MCF 10A (cell line): ENCODE measurements at regions of chr9 and their contacts with region 1.

Region 1: GRCh38 chr9:128688512-128689292 is at the start of gene SET:
- DNase-seq: peak; percentile 92
- H3K4me3 Mint-ChIP-seq: peak within 1 kb of the TSS; percentile 90
- H3K27ac Mint-ChIP-seq: peak within 1 kb of the TSS; percentile 67
- H3K4me1 Mint-ChIP-seq: peaks cover 40% of the 10 kb centered on the region
- H3K27me3 Mint-ChIP-seq: no peaks in the 10 kb centered on the region
- CTCF ChIP-seq: no peak
- total RNA-seq, gene SET: 512 and 563 TPM in 2 replicates

Region 2: GRCh38 chr9:128405077-128405779 is 283.5 kb before region 1 on chr9:
- CTCF ChIA-PET with region 1: no interaction called
- POLR2A ChIA-PET with region 1: no interaction called
- intact Hi-C with region 1: no loop called
- DNase-seq: no peak
- H3K4me3 Mint-ChIP-seq: no peak overlapping the region
- H3K27ac Mint-ChIP-seq: no peak overlapping the region
- H3K4me1 Mint-ChIP-seq: no peaks in the 10 kb centered on the region
- H3K27me3 Mint-ChIP-seq: no peaks in the 10 kb centered on the region
- CTCF ChIP-seq: no peak

Region 3: DNA sequence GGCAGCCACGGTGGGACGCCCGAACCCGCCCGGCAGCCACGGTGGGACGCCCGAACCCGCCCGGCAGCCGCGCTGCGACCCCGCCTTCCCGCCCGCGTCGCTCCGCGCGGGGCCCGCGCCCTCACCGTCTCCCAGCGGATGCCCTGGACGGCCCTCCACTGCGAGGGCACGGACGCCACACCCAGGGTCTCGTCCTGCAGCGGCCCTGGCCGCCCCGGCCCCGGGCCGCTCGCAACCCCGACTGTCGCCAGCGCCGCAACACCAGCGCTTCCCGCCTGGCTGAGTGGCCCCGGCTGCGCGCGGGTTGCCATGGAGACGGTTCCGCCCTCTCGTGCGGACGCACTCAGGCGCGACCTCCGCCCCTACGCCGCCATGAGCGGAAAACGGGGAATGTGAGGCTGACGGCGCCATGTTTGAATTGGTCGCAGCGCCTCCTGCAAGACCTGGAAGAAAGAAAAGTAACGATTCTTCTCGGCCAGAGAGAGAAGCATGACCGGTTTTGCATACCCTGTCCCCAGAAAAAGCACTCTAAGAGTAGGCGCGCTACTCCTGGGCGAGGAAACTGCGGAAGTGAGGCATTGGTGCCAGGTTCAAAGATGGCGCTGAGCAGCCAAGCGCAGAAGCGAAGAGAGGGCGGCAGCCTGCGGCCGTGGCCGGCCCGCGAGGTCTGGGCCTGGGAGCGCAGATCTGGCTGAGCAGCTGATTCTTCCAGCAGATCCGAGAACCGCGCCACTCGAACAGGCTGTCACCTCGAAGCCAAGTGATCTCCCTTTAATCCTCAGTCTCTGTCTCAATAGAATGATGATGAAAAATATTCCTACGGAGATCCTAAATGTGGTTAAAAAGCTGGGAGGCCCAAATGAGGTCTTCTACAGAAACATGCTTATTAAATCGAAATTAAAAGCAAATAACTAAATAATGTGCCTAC is 32.0 kb before region 1 on chr9 and contains the start of gene DYNC2I2:
- CTCF ChIA-PET with region 1: no interaction called
- POLR2A ChIA-PET with region 1: interaction called, 27 read pairs
- intact Hi-C with region 1: no loop called
- DNase-seq: peak; percentile 93
- H3K4me3 Mint-ChIP-seq: peak within 1 kb of the TSS; percentile 67
- H3K27ac Mint-ChIP-seq: peak within 1 kb of the TSS; percentile 98
- H3K4me1 Mint-ChIP-seq: peaks cover 8% of the 10 kb centered on the region
- H3K27me3 Mint-ChIP-seq: no peaks in the 10 kb centered on the region
- CTCF ChIP-seq: no peak
- total RNA-seq, gene DYNC2I2: 31.7 and 43.7 TPM in 2 replicates

Region 4: DNA sequence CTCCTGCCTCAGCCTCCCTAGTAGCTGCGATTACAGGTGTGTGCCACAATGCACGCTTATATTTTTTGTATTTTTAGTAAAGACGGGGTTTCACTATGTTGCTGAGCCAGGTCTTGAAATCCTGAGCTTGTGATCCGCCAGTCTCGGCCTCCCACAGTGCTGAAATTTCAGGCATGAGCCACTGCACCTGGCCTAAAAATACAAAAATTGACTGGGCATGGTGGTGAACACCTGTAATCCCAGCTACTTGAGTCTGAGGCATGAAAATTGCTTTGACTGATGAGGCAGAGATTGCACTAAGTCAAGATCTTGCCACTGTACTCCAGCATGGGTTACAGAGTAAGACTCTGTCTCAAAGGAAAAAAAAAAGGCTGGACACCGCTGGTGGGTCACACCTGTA is 18.9 kb before region 1 on chr9:
- CTCF ChIA-PET with region 1: no interaction called
- POLR2A ChIA-PET with region 1: interaction called, 20 read pairs
- intact Hi-C with region 1: no loop called
- DNase-seq: no peak
- H3K4me3 Mint-ChIP-seq: no peak overlapping the region
- H3K27ac Mint-ChIP-seq: no peak overlapping the region
- H3K4me1 Mint-ChIP-seq: no peaks in the 10 kb centered on the region
- H3K27me3 Mint-ChIP-seq: no peaks in the 10 kb centered on the region
- CTCF ChIP-seq: no peak

Region 5: DNA sequence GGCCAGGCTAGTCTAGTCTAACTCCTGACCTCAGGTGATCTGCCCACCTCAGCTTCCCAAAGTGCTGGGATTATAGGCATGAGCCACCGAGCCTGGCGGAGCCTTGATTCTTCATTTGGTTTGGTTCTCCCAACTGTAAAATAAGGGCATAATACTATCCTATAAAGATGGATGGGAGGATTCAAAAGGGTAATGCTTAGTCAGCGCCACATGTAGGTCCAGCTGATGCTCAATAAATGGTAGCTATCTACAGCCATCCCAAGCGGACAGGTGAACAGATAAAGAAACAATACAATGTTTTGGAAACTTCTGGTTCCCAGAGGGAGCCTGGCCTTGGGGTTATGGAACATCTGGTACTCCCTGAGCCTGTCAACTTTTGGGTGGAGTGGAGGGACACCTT is 13.3 kb before region 1 on chr9:
- CTCF ChIA-PET with region 1: interaction called, 4 read pairs
- POLR2A ChIA-PET with region 1: interaction called, 20 read pairs
- intact Hi-C with region 1: no loop called
- DNase-seq: no peak
- H3K4me3 Mint-ChIP-seq: no peak overlapping the region
- H3K27ac Mint-ChIP-seq: no peak overlapping the region
- H3K4me1 Mint-ChIP-seq: no peaks in the 10 kb centered on the region
- H3K27me3 Mint-ChIP-seq: no peaks in the 10 kb centered on the region
- CTCF ChIP-seq: no peak

Region 6: DNA sequence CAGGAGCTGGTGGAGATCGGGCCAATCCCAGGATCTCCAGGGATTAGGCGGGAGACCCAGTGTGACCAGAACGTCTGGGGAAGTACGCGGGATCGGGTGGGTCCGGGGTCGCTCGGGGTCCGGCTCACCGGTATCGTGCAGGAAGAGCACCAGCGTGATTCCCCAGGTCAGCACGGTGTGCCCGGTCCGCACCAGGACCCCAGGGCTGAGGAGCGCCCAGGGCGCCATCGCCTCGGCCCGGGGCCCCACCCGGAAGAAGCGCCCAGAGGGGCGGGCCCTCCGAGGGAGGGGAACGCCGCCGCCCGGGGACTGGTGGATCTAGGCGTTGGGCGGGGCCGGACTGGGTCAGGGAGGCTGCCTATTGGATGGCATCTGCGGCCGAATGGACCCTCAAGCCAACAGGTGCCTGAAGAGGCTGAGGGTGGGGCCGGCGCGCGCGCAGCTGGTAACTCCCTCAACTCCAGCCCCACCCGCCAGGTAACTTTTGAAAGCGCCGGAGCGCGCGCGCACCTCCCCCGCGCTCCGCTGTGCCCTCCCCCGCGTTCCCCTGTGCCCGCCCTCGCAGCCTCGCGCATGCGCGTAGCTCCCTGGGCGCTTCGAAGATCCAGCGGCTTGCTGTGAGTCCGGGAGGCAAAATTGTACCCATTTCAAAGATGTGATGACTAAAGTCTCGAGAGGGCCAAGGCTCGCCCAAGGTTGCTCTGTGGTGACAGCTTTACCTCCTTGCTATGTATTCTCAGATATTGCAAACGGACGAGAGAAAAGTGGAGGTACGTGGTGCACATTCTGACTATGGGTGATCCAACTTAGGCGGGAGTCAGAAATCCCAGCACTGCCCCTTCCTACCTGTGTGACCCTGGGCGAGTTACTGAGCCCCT is 35.4 kb after region 1 on chr9 and contains the start of gene ZDHHC12:
- CTCF ChIA-PET with region 1: interaction called, 3 read pairs
- POLR2A ChIA-PET with region 1: interaction called, 21 read pairs
- intact Hi-C with region 1: no loop called
- DNase-seq: peak; percentile 99
- H3K4me3 Mint-ChIP-seq: peak within 1 kb of the TSS; percentile 80
- H3K27ac Mint-ChIP-seq: peak within 1 kb of the TSS; percentile 79
- H3K4me1 Mint-ChIP-seq: peaks cover 36% of the 10 kb centered on the region
- H3K27me3 Mint-ChIP-seq: no peaks in the 10 kb centered on the region
- CTCF ChIP-seq: no peak
- total RNA-seq, gene ZDHHC12: 22.1 and 22.9 TPM in 2 replicates

Region 7: DNA sequence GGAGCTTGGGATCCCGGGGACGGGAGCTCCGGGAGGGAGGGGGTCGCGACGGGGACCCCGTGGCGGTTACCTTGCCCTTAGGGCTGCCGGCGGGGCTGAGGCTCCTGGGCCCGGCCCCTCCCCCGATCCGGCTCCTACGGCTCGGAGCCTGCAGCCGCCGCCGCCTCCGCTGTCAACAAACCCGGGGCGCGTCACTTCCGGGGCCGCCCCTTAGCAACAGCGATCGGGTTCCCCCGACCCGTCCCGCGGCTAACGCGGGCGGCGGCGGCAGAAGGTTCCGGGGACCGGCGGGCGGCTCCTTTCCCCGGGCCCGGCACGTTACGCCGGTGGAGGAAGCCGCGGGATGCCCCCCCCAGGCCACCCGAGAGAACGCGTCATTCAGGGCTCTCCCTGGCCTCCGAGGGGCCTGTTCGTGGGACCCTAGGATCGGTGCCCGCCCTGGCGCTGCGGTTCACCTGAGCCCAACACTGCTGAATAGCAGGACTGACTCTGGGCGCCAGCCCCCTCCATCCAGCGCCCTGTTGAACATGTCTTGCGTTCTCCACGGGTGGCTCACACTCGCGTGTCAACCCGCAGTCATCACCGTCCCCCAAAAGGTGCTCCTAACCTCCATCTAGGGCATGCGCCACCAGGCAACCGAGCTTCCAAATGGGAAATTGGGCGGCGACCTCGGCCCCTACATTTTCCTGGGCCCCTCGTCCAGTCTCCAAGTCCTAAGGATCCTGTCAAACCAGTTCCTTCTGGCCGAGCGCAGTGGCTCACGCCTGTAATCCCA is 83.2 kb after region 1 on chr9 and contains the start of gene ZER1:
- CTCF ChIA-PET with region 1: no interaction called
- POLR2A ChIA-PET with region 1: interaction called, 19 read pairs
- intact Hi-C with region 1: no loop called
- DNase-seq: peak; percentile 85
- H3K4me3 Mint-ChIP-seq: peak within 1 kb of the TSS; percentile 96
- H3K27ac Mint-ChIP-seq: peak within 1 kb of the TSS; percentile 92
- H3K4me1 Mint-ChIP-seq: peaks cover 11% of the 10 kb centered on the region
- H3K27me3 Mint-ChIP-seq: no peaks in the 10 kb centered on the region
- CTCF ChIP-seq: no peak
- total RNA-seq, gene ZER1: 19.5 and 26.6 TPM in 2 replicates